B cell (primary cell): ENCODE measurements at regions of chr17 and their contacts with region 1.

Region 1: GRCh38 chr17:20226814-20227482 is 217.8 kb downstream of the SPECC1 start:
- DNase-seq: peak; percentile 66
- ATAC-seq: peak; percentile 53
- H3K4me3 ChIP-seq: no peak overlapping the region
- H3K4me3 Mint-ChIP-seq: no peak overlapping the region
- H3K27ac ChIP-seq: no peak overlapping the region
- H3K27ac Mint-ChIP-seq: no peak overlapping the region
- H3K4me1 ChIP-seq: no peaks in the 10 kb centered on the region
- H3K4me1 Mint-ChIP-seq: no peaks in the 10 kb centered on the region
- H3K27me3 ChIP-seq: no peaks in the 10 kb centered on the region
- H3K27me3 Mint-ChIP-seq: no peaks in the 10 kb centered on the region
- CTCF ChIP-seq: peak; percentile 82

Region 2: GRCh38 chr17:20159406-20160075 is 67.4 kb before region 1 on chr17:
- CTCF ChIA-PET with region 1: no interaction called
- POLR2A ChIA-PET with region 1: no interaction called
- intact Hi-C with region 1: no loop called
- DNase-seq: no peak
- ATAC-seq: no peak
- H3K4me3 ChIP-seq: no peak overlapping the region
- H3K4me3 Mint-ChIP-seq: no peak overlapping the region
- H3K27ac ChIP-seq: no peak overlapping the region
- H3K27ac Mint-ChIP-seq: no peak overlapping the region
- H3K4me1 ChIP-seq: peaks cover 15 to 18% of the 10 kb centered on the region in 2 donors
- H3K4me1 Mint-ChIP-seq: peaks cover 4% of the 10 kb centered on the region
- H3K27me3 ChIP-seq: no peaks in the 10 kb centered on the region
- H3K27me3 Mint-ChIP-seq: no peaks in the 10 kb centered on the region
- CTCF ChIP-seq: no peak

Region 3: DNA sequence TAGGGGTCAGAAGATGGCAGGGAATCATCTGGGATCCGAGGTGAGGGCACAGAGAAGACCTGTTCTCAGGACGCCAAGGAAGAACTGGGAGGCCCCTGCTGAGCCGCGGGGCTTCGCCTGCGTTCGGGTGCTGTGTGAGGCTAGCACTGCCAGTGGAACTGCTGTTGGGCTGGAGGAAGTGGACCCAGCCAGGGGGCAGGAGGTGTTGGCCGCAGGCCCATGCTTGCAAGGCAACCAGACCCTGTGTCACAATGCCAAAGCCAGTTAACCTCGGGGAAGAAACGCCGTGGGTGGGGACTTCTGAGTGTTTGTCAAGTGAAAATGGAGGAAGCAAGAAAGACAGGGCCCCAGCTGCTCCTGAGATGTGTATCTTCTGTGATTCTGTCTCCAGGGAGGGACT is 54.9 kb after region 1 on chr17:
- CTCF ChIA-PET with region 1: no interaction called
- POLR2A ChIA-PET with region 1: no interaction called
- intact Hi-C with region 1: no loop called
- DNase-seq: no peak
- ATAC-seq: no peak
- H3K4me3 ChIP-seq: no peak overlapping the region
- H3K4me3 Mint-ChIP-seq: no peak overlapping the region
- H3K27ac ChIP-seq: no peak overlapping the region
- H3K27ac Mint-ChIP-seq: no peak overlapping the region
- H3K4me1 ChIP-seq: no peaks in the 10 kb centered on the region
- H3K4me1 Mint-ChIP-seq: no peaks in the 10 kb centered on the region
- H3K27me3 ChIP-seq: no peaks in the 10 kb centered on the region
- H3K27me3 Mint-ChIP-seq: no peaks in the 10 kb centered on the region
- CTCF ChIP-seq: no peak

Region 4: DNA sequence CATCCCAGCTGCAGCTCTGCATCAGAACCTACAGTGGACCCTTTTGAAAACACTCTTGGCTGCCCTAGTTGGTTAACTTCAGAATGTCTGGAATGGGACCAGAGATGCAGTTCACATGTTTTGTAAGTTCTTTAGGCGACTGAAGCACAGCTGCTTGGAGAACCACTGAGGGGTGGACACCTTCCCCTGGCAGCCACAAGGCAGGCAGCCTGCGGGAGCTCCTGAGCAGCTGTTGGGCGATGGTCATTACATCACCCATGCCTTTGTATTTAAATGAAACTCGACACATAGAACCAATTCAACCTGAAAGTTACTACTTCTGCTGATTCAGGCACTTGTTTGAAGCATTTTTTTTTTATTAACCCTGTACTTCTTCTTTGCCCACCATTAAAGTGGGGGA is 88.9 kb after region 1 on chr17:
- CTCF ChIA-PET with region 1: interaction called, 8 read pairs
- POLR2A ChIA-PET with region 1: no interaction called
- intact Hi-C with region 1: loop called (anchors 10 kb)
- DNase-seq: no peak
- ATAC-seq: no peak
- H3K4me3 ChIP-seq: no peak overlapping the region
- H3K4me3 Mint-ChIP-seq: no peak overlapping the region
- H3K27ac ChIP-seq: no peak overlapping the region
- H3K27ac Mint-ChIP-seq: no peak overlapping the region
- H3K4me1 ChIP-seq: peaks cover 0 to 2% of the 10 kb centered on the region in 2 donors
- H3K4me1 Mint-ChIP-seq: no peaks in the 10 kb centered on the region
- H3K27me3 ChIP-seq: no peaks in the 10 kb centered on the region
- H3K27me3 Mint-ChIP-seq: no peaks in the 10 kb centered on the region
- CTCF ChIP-seq: no peak

Region 5: DNA sequence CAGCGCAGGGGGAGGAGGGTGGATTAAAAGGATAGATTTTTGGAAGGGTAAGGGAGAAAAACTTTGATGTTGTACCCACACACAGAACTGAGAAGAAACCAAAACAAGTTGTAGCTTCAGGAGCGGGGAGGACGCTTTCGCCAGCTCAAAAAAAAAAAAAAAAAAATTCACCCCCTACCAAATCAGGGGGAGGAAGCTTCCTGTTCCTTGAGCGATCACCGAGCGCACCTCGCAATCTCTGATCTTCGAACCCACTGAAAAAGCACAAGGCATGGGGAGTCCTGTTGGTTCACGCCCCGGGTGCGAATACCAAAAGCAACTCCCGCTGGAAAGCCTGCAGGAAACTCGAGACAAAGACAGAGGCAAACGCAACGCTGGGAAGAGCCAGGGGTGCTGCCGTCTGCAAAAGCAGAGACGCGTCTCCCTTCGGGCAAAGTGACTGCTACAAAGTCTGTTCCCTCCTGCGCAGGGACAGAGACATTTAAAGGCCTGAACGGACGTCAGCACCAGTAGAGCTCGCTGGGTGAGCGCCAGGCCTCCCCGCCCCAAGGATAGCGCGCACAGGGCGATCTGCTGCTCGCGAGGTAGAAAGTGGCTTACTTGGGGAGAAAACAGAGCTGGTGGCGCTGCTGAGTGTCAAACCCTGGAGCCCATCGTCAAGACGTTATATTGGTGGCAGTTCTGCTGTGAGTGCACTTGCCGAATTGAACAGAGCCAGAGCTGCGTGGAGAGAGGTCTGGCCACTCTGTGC is 625.5 kb after region 1 on chr17:
- CTCF ChIA-PET with region 1: interaction called, 5 read pairs
- POLR2A ChIA-PET with region 1: no interaction called
- intact Hi-C with region 1: loop called (anchors 2 kb)
- DNase-seq: peak; percentile 48
- ATAC-seq: peak; percentile 56
- H3K4me3 ChIP-seq: peak overlapping the region in 1 of 5 experiments; percentile 1
- H3K4me3 Mint-ChIP-seq: peak overlapping the region; percentile 72
- H3K27ac ChIP-seq: no peak overlapping the region
- H3K27ac Mint-ChIP-seq: no peak overlapping the region
- H3K4me1 ChIP-seq: peaks cover 0 to 4% of the 10 kb centered on the region in 2 donors
- H3K4me1 Mint-ChIP-seq: peaks cover 15% of the 10 kb centered on the region
- H3K27me3 ChIP-seq: peaks cover 0 to 11% (median 1%) of the 10 kb centered on the region in 4 experiments
- H3K27me3 Mint-ChIP-seq: peaks cover 38% of the 10 kb centered on the region
- CTCF ChIP-seq: no peak